Vagina (tissue), 2 donors: ENCODE measurements at regions of chrX and their contacts with region 1.

Region 1: GRCh38 chrX:97401154-97401553 is 517.4 kb downstream of the RPA4 start:
- DNase-seq: no peak
- H3K4me3 ChIP-seq: no peak overlapping the region
- H3K27ac ChIP-seq: no peak overlapping the region
- H3K4me1 ChIP-seq: no peaks in the 10 kb centered on the region
- H3K27me3 ChIP-seq: no peaks in the 10 kb centered on the region
- CTCF ChIP-seq: no peak
- POLR2A ChIP-seq: no peak

Region 2: GRCh38 chrX:95612350-95612749 is 1788.8 kb before region 1 on chrX:
- intact Hi-C with region 1: loop called (anchors 10 kb)
- DNase-seq: no peak
- H3K4me3 ChIP-seq: no peak overlapping the region
- H3K27ac ChIP-seq: no peak overlapping the region
- H3K4me1 ChIP-seq: no peaks in the 10 kb centered on the region
- H3K27me3 ChIP-seq: no peaks in the 10 kb centered on the region
- CTCF ChIP-seq: no peak
- POLR2A ChIP-seq: no peak